ENCODE measurements at regions of chr1 and their contacts with region 1.

Region 1: GRCh38 chr1:184075055-184076029 is 23.8 kb downstream of the TSEN15 start:
- DNase-seq: peak in 1 of 3 donors; percentile 76
- ATAC-seq: peak; percentile 69
- H3K4me3 ChIP-seq: no peak overlapping the region
- H3K4me1 ChIP-seq: no peaks in the 10 kb centered on the region
- CTCF ChIP-seq: peak; percentile 23

Region 2: DNA sequence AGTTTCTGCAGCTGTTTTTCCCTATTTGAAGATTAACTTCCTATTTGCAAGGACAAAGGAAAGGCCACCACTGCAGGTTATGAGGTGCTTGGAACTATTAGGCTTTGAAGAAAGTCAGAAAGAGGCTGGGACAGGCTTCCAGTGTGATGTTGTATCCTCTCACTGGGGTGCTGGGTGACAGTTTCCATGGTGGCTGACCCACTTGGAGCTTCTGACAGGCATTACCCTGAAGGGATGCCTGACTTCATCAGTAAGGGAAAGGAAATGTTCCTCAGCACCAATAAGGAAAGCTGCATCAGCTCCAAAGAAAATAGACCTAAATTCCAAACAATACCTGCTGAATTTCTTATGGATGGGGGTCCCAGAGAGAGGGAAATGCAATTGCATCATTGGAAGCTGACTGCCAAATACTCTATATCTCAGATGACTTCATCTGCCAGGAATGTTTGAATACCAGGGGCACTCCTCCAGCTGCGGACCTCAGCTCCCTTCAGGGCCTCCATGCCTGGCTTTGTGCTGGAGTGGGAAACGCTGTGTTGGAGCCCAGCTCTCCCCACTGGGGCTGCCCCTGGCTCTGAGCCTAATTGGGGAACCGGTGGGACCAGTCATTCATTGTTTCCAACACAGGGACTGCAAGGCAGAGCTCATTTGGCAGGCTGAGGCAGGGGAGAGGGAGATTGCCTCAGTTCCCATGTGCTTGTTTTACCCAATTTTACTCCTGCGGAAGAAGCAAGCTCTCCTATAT is 193.8 kb before region 1 on chr1:
- intact Hi-C with region 1: no loop called
- DNase-seq: peak in 1 of 3 donors; percentile 58
- ATAC-seq: peak; percentile 23
- H3K4me3 ChIP-seq: no peak overlapping the region
- H3K4me1 ChIP-seq: no peaks in the 10 kb centered on the region
- CTCF ChIP-seq: no peak

Region 3: DNA sequence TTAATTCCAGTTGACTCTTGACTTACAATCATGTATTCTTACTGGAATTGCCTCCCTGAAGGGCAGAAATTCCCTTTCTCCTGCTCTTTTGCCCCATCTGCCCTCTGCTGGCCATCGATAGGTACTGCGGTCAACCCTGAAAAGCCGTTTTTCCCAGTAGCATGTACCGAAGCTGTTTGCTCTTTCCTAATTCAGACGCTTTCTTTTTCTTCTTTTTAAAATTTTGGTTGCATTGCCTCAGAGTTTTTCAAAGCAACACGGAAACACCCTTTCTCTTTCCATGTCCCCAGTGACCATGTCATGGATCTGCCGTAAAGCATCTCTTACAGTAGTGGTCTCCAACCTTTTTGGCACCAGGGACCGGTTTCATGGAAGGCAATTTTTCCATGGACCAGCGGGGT is 147.3 kb after region 1 on chr1:
- intact Hi-C with region 1: loop called (anchors 5 kb)
- DNase-seq: peak in 2 of 3 donors; percentile 52 to 56
- ATAC-seq: peak; percentile 80
- H3K4me3 ChIP-seq: no peak overlapping the region
- H3K4me1 ChIP-seq: no peaks in the 10 kb centered on the region
- CTCF ChIP-seq: peak; percentile 89

Region 4: DNA sequence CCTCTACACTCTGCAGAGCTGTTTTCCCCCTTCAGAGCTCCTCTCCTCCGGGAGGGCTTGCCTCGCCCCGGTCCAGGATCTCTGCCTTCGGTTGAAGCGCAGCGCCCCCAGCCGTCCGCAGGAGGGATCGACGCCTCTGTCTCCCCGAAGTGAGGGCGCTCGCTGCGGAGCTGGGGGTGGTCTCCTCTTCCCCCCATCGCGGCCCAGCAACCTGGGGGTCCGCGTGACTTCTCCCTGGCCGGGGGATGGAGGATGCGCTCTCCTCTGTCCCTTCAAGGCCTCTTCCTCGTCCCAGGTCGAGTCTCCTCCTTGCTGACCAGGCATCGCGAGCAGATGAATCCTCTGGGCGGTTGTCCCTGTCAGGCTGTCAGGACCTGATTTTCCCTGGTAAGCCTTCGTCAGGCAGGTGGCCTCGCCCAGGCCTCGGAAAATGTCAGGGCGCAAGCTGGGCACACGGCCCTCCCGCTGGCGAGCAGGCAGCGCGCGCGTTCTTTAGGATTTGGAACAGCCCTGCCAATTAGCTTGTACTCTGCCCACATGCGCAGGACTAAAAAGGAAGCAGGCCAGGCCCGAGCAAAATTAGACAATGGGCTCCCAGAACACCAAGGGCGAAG is 588.8 kb after region 1 on chr1:
- intact Hi-C with region 1: loop called (anchors 5 to 10 kb)
- DNase-seq: peak; percentile 79 to 84 (median 83)
- ATAC-seq: peak; percentile 96
- H3K4me3 ChIP-seq: no peak overlapping the region
- H3K4me1 ChIP-seq: no peaks in the 10 kb centered on the region
- CTCF ChIP-seq: peak; percentile 93

Region 5: DNA sequence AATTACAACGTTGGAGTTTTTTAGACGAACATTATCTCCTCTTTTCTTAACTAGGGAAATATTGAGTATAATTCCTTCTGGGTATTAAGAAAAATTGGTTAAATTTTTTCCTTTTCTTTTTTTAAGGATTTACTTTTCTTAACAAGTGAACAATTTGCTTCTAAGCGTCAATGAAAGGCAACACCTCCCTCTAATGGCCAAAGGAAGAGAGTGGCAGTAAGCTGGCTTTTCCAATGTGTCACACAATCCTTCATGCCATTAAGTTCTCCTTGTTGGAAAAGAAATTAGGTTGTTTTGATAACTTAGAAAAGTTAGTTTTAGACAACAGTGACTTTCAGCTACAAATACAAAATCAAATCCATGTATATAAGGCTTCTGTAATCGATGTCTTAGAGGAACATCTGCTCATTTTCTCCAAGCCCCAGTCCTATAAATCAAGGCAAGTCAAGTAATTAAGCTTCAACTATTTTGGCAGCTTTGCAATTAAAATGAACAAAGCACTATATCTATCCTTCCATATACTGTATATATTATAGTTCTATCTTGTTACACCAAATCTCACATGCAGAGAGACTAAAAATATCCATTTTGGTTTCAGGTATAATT is 616.5 kb after region 1 on chr1:
- intact Hi-C with region 1: loop called in 1 of 2 experiments (anchors 10 kb)
- DNase-seq: peak in 1 of 3 donors; percentile 38
- ATAC-seq: no peak
- H3K4me3 ChIP-seq: no peak overlapping the region
- H3K4me1 ChIP-seq: no peaks in the 10 kb centered on the region
- CTCF ChIP-seq: peak; percentile 40

Measured in mucosa of descending colon (tissue), 3 donors.